Activated CD4-positive, alpha-beta T cell treated with anti-CD3 and anti-CD28 coated beads, Interleukin-2, amount 10 ng/mL, durations not matched to agents 24 days and 14 days (primary cell): ENCODE measurements at regions of chr13 and their contacts with region 1.

Region 1: GRCh38 chr13:108508263-108508662 is 121.1 kb upstream of the MYO16 start:
- DNase-seq: no peak
- H3K4me3 Mint-ChIP-seq: no peak overlapping the region
- H3K27ac Mint-ChIP-seq: no peak overlapping the region
- H3K4me1 Mint-ChIP-seq: no peaks in the 10 kb centered on the region
- H3K27me3 Mint-ChIP-seq: no peaks in the 10 kb centered on the region

Region 2: GRCh38 chr13:108322206-108322824 is 185.9 kb before region 1 on chr13:
- intact Hi-C with region 1: loop called (anchors 5 kb)
- DNase-seq: no peak
- H3K4me3 Mint-ChIP-seq: no peak overlapping the region
- H3K27ac Mint-ChIP-seq: no peak overlapping the region
- H3K4me1 Mint-ChIP-seq: peaks cover 3% of the 10 kb centered on the region
- H3K27me3 Mint-ChIP-seq: peaks cover 34% of the 10 kb centered on the region